Panc1 (cell line): ENCODE measurements at regions of chr1 and their contacts with region 1.

Region 1: DNA sequence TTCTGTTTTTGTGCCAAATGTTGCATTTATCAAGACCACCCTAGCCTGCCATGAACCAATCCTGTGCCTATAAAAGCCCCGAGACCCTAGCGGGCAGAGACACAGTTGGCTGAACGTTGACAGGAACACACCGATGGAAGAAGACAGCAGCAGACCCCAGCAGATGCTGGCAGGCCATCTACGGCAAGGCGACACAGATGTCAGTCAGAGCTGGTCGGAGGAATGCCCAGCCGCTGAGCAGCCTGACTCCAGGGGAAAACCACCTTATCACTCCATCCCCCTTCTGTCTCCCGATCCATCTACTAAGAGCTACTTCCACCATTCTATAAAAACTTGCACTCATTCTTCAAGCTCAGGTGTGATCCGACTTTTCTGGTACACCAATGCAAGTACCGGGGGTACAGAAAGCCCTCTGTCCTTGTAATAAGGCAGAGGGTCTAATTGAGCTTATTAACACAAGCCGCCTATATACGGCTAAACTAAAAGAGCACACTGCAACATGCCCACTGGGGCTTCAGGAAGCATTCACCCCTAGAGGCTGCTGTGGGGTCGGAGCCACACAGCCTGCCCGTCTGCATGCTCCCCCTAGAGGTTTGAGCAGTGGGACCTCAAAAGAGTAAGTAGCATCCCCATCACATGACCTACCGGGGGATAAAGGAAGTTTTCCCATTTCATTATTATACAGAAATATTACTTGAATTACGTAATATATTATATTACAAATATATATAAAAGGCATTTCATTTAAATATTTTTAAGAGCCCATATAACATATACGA is 1156.3 kb upstream of the B3GALT2 start:
- DNase-seq: no peak
- ATAC-seq: no peak
- H3K4me3 ChIP-seq: no peak overlapping the region
- H3K27ac ChIP-seq: no peak overlapping the region
- H3K4me1 ChIP-seq: no peaks in the 10 kb centered on the region
- H3K27me3 ChIP-seq: no peaks in the 10 kb centered on the region
- CTCF ChIP-seq: no peak

Region 2: DNA sequence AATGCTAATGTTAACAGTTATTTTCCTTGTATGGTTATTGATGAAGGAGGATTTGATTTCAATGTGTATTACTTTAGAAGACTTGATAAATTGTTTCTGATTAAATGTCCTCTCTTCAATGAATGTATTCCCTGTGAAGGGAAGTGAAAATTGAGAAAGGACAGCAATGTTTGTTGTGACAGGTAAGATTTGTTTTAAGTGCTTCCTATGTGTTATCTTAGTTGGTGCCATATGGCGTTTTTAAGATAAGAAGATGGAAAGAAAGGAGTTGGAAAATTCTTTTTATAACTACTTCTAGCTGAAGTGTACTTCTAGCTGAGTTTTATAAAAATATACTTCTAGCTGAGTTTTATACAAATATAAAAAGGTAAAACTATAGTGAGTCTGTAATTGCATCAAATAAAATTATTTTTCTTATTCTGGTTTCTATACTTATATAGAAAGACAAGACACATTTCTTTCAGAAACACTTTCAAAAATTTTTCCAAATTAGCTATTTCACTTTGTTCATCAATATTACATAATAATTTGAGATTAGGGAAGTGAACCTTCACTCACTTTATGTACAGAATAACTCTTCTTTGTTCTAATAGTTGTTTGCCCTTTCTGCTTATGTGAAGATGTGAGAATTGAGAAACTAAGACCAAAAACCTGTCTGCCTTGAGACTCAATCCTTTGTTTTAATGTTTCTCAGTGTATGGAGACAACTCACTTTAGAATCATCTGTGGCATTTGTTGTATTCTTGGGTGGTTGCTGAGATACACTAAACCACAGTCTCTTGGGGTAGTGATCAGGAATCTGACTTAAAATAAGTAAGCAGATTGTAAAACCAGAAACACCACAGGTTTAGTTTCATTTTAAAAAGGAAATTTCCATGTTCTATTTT is 773.3 kb before region 1 on chr1:
- CTCF ChIA-PET with region 1: no interaction called
- POLR2A ChIA-PET with region 1: interaction called, 11 read pairs
- in situ Hi-C with region 1: no loop called
- intact Hi-C with region 1: no loop called
- DNase-seq: no peak
- ATAC-seq: no peak
- H3K4me3 ChIP-seq: no peak overlapping the region
- H3K27ac ChIP-seq: no peak overlapping the region
- H3K4me1 ChIP-seq: no peaks in the 10 kb centered on the region
- H3K27me3 ChIP-seq: no peaks in the 10 kb centered on the region
- CTCF ChIP-seq: no peak

Region 3: GRCh38 chr1:195251900-195252299 is 909.2 kb after region 1 on chr1:
- CTCF ChIA-PET with region 1: no interaction called
- POLR2A ChIA-PET with region 1: no interaction called
- in situ Hi-C with region 1: no loop called
- intact Hi-C with region 1: no loop called
- DNase-seq: no peak
- ATAC-seq: no peak
- H3K4me3 ChIP-seq: no peak overlapping the region
- H3K27ac ChIP-seq: no peak overlapping the region
- H3K4me1 ChIP-seq: no peaks in the 10 kb centered on the region
- H3K27me3 ChIP-seq: no peaks in the 10 kb centered on the region
- CTCF ChIP-seq: no peak